Activated CD4-positive, alpha-beta T cell treated with anti-CD3 and anti-CD28 coated beads for 36 hours (primary cell): ENCODE measurements at regions of chr11 and their contacts with region 1.

Region 1: DNA sequence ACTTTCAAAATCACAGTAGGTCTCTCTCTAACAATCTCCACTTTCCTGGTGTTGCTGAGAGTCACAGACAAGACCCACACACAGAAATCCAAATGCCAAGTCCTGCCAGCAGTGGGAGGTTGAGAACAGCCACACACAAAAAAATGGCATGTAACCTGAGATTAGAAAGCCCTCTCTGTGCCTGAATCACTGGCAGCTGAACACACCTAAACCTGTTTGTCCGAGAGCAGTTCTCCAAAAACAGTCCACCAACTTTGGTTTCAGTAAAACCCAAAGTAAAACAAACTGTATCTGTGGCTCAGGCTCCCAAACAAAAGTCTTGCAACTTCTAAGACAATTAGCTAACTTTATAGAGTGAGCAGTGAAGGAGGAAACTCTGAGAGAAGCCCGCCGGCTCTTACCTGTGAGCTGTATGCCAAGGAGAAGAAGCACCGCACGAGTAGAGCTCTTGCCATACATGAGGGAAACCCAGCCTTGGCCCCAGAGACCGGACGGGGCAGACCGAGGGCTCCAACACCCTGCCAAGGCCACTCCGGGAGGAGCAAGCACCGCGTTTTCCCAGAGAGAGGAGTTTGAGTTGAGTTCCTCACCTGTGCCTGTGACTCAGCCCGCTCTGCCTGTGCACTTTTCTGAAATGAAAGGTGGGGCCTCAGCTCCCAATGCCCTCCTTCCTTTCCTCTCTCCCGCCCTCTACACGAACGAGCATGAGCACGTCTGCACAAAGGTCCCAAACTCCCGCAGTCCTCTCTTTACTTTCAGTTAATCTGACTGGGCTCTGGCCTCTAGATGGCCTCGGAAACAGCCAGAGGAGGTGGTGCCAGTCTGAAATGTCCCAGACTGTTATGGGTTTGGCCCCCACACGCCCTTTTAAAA is at the start of gene MPZL2:
- DNase-seq: peak; percentile 67
- ATAC-seq: peak; percentile 85
- H3K4me3 Mint-ChIP-seq: peak within 1 kb of the TSS; percentile 74
- H3K27ac Mint-ChIP-seq: peak within 1 kb of the TSS; percentile 72
- H3K4me1 Mint-ChIP-seq: peaks cover 58% of the 10 kb centered on the region
- H3K27me3 Mint-ChIP-seq: no peaks in the 10 kb centered on the region
- total RNA-seq, gene MPZL2: 26.7 to 30.1 TPM

Region 2: GRCh38 chr11:117217141-117218084 is 1046.5 kb before region 1 on chr11:
- CTCF ChIA-PET with region 1: no interaction called
- POLR2A ChIA-PET with region 1: no interaction called
- intact Hi-C with region 1: no loop called
- DNase-seq: no peak
- ATAC-seq: no peak
- H3K4me3 Mint-ChIP-seq: no peak overlapping the region
- H3K27ac Mint-ChIP-seq: peak overlapping the region; percentile 40
- H3K4me1 Mint-ChIP-seq: peaks cover 6% of the 10 kb centered on the region
- H3K27me3 Mint-ChIP-seq: no peaks in the 10 kb centered on the region

Region 3: GRCh38 chr11:117663821-117664220 is 600.1 kb before region 1 on chr11:
- CTCF ChIA-PET with region 1: no interaction called
- POLR2A ChIA-PET with region 1: no interaction called
- intact Hi-C with region 1: no loop called
- DNase-seq: no peak
- ATAC-seq: no peak
- H3K4me3 Mint-ChIP-seq: no peak overlapping the region
- H3K27ac Mint-ChIP-seq: no peak overlapping the region
- H3K4me1 Mint-ChIP-seq: no peaks in the 10 kb centered on the region
- H3K27me3 Mint-ChIP-seq: peaks cover 2% of the 10 kb centered on the region

Region 4: GRCh38 chr11:118277306-118277705 is 13.4 kb after region 1 on chr11:
- CTCF ChIA-PET with region 1: interaction called, 13 read pairs
- POLR2A ChIA-PET with region 1: interaction called, 8 read pairs
- intact Hi-C with region 1: no loop called
- DNase-seq: peak; percentile 27
- ATAC-seq: peak; percentile 72
- H3K4me3 Mint-ChIP-seq: no peak overlapping the region
- H3K27ac Mint-ChIP-seq: peak overlapping the region; percentile 20
- H3K4me1 Mint-ChIP-seq: peaks cover 51% of the 10 kb centered on the region
- H3K27me3 Mint-ChIP-seq: no peaks in the 10 kb centered on the region

Region 5: DNA sequence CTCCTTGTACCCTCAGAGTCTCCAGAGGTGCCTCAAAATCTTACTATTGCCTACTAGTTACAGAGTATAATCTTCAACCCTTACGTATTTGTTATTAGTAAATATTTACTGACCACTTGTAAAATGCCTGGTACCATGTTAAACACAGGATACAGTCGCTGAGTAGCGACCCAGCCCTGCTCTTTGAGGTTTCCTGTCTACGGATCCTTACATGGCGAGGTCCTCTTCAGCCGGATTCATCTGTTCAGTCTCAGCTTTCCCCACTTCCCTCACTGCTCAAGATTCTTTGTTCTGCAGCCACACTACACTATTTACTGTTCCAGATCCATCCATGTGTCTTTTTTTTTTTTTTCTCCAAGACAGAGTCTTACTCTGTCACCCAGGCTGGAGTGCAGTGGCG is 250.2 kb after region 1 on chr11:
- CTCF ChIA-PET with region 1: no interaction called
- POLR2A ChIA-PET with region 1: interaction called, 10 read pairs
- intact Hi-C with region 1: no loop called
- DNase-seq: no peak
- ATAC-seq: no peak
- H3K4me3 Mint-ChIP-seq: no peak overlapping the region
- H3K27ac Mint-ChIP-seq: peak overlapping the region; percentile 20
- H3K4me1 Mint-ChIP-seq: peaks cover 7% of the 10 kb centered on the region
- H3K27me3 Mint-ChIP-seq: no peaks in the 10 kb centered on the region